ENCODE measurements at regions of chr19 and their contacts with region 1.

Region 1: GRCh38 chr19:9295411-9295849 is 14.2 kb downstream of the ZNF699 start:
- DNase-seq: no peak
- ATAC-seq: no peak
- H3K4me3 Mint-ChIP-seq: no peak overlapping the region
- H3K27ac Mint-ChIP-seq: no peak overlapping the region
- H3K4me1 Mint-ChIP-seq: no peaks in the 10 kb centered on the region
- H3K27me3 Mint-ChIP-seq: no peaks in the 10 kb centered on the region

Region 2: DNA sequence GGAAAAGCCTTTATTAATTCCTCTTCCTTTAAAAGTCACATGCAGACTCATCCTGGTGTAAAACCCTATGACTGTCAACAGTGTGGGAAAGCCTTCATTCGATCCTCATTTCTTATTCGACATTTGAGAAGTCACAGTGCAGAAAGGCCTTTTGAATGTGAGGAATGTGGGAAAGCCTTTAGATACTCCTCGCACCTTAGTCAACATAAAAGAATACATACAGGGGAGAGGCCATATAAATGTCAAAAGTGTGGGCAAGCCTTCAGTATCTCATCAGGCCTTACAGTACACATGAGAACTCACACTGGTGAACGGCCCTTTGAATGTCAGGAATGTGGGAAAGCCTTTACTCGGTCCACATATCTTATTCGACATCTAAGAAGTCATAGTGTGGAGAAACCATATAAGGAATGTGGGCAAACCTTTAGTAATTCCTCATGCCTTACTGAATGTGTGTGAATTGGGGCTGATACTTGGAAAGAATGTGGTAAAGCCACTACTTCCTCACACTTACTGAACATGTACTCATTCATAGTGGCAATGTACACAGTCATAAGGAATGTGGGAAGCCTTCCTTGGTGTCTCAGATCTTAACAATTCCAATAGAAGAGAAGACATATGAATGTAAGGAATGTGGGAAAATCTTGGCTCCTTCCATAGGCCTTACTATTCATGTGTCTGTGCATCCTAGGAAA is 47.3 kb after region 1 on chr19:
- CTCF ChIA-PET with region 1: no interaction called
- POLR2A ChIA-PET with region 1: no interaction called
- intact Hi-C with region 1: loop called in 1 of 2 experiments (anchors 5 kb)
- DNase-seq: no peak
- ATAC-seq: no peak
- H3K4me3 Mint-ChIP-seq: no peak overlapping the region
- H3K27ac Mint-ChIP-seq: no peak overlapping the region
- H3K4me1 Mint-ChIP-seq: no peaks in the 10 kb centered on the region
- H3K27me3 Mint-ChIP-seq: no peaks in the 10 kb centered on the region